ENCODE measurements at regions of chr21 and their contacts with region 1.

Region 1: GRCh38 chr21:32826329-32827167 is 55.0 kb upstream of the PAXBP1 start:
- DNase-seq: peak; percentile 53
- ATAC-seq: peak; percentile 91
- H3K4me3 Mint-ChIP-seq: no peak overlapping the region
- H3K27ac Mint-ChIP-seq: no peak overlapping the region
- H3K4me1 Mint-ChIP-seq: peaks cover 3% of the 10 kb centered on the region
- H3K27me3 Mint-ChIP-seq: peaks cover 12% of the 10 kb centered on the region

Region 2: GRCh38 chr21:32653311-32653901 is 173.1 kb before region 1 on chr21:
- CTCF ChIA-PET with region 1: interaction called, 18 read pairs
- POLR2A ChIA-PET with region 1: no interaction called
- DNase-seq: peak; percentile 54
- ATAC-seq: peak; percentile 70
- H3K4me3 Mint-ChIP-seq: no peak overlapping the region
- H3K27ac Mint-ChIP-seq: no peak overlapping the region
- H3K4me1 Mint-ChIP-seq: peaks cover 10% of the 10 kb centered on the region
- H3K27me3 Mint-ChIP-seq: no peaks in the 10 kb centered on the region

Region 3: GRCh38 chr21:32658524-32658923 is 168.0 kb before region 1 on chr21:
- CTCF ChIA-PET with region 1: interaction called, 18 read pairs
- POLR2A ChIA-PET with region 1: no interaction called
- DNase-seq: no peak
- ATAC-seq: no peak
- H3K4me3 Mint-ChIP-seq: no peak overlapping the region
- H3K27ac Mint-ChIP-seq: no peak overlapping the region
- H3K4me1 Mint-ChIP-seq: no peaks in the 10 kb centered on the region
- H3K27me3 Mint-ChIP-seq: no peaks in the 10 kb centered on the region

Region 4: GRCh38 chr21:32782698-32783097 is 43.9 kb before region 1 on chr21:
- CTCF ChIA-PET with region 1: interaction called, 14 read pairs
- POLR2A ChIA-PET with region 1: no interaction called
- DNase-seq: no peak
- ATAC-seq: no peak
- H3K4me3 Mint-ChIP-seq: no peak overlapping the region
- H3K27ac Mint-ChIP-seq: no peak overlapping the region
- H3K4me1 Mint-ChIP-seq: peaks cover 1% of the 10 kb centered on the region
- H3K27me3 Mint-ChIP-seq: no peaks in the 10 kb centered on the region

Region 5: DNA sequence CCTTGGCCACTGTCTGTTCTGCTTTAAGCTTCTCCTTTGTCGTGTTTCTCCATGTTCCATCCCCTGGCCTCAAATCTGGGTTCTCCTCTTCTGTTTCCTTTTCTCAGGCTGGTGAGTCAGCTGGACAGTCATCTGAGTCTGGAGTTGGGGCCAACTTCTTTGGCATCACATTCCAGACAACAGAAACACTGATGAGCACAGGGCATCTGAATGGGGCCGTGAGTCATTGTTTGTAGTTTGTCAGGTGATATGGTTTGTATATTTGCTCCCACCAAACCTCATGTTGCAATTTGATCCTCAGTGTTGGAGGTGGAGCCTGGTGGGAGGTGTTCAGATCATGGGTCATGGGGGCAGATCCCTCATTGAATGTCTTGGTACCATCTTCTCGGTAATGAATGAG is 184.9 kb after region 1 on chr21:
- CTCF ChIA-PET with region 1: no interaction called
- POLR2A ChIA-PET with region 1: no interaction called
- DNase-seq: no peak
- ATAC-seq: no peak
- H3K4me3 Mint-ChIP-seq: no peak overlapping the region
- H3K27ac Mint-ChIP-seq: no peak overlapping the region
- H3K4me1 Mint-ChIP-seq: no peaks in the 10 kb centered on the region
- H3K27me3 Mint-ChIP-seq: peaks cover 46% of the 10 kb centered on the region

Measured in activated CD8-positive, alpha-beta T cell treated with anti-CD3 and anti-CD28 coated beads, Interleukin-2, amount 10 ng/mL, durations not matched to agents 7 days and 5 days (primary cell).